ENCODE measurements at regions of chr5 and their contacts with region 1.

Region 1: DNA sequence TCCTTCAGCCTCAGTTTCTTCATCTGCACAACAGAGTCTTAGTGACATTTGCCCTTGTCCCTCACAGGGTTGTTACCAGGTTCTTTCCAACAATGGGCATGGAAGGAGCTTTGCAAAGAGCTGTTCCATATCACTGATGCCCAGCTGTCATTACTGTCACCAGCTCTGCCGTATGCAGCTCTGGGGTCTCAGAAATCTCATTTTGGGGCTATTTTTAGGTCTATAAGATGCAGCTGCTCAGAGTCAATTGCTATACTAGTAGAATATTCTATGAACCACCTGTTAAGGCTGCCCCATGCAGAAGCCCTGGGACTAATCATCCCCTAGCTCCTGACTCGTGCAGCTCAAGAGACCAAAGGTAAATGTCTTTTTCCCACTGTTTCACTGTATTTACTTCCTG is 105.1 kb upstream of the TNPO1 start:
- DNase-seq: no peak
- ATAC-seq: no peak
- H3K4me3 ChIP-seq: no peak overlapping the region
- H3K27ac ChIP-seq: no peak overlapping the region
- H3K4me1 ChIP-seq: no peaks in the 10 kb centered on the region
- H3K27me3 ChIP-seq: no peaks in the 10 kb centered on the region

Region 2: DNA sequence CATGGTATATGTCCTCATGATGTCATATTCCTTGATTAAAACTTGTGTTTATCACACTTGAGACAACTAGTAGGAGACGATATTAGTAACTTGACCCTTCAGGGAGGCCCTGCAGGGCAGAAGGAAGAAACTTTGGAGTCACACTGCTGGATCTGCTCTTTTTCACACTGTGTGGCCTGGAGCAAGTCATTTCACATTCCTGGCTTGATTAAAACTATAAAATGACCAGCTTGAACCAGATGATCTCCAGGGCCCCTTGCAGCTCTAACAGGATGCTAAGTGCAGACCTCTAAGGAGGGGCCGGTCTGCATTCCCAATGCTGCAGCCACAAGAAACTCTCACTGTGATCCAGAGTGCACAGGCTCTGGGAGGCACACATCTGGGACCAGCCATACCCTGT is 57.8 kb before region 1 on chr5:
- intact Hi-C with region 1: loop called in 1 of 4 experiments (anchors 10 kb)
- DNase-seq: no peak
- ATAC-seq: no peak
- H3K4me3 ChIP-seq: no peak overlapping the region
- H3K27ac ChIP-seq: no peak overlapping the region
- H3K4me1 ChIP-seq: no peaks in the 10 kb centered on the region
- H3K27me3 ChIP-seq: no peaks in the 10 kb centered on the region

Measured in right cardiac atrium (tissue), 5 donors.